Activated CD4-positive, alpha-beta T cell treated with anti-CD3 and anti-CD28 coated beads for 36 hours (primary cell): ENCODE measurements at regions of chr16 and their contacts with region 1.

Region 1: GRCh38 chr16:4271176-4272066 is 1.4 kb downstream of the TFAP4 start:
- DNase-seq: peak; percentile 96
- ATAC-seq: peak; percentile 85
- H3K4me3 Mint-ChIP-seq: peak overlapping the region; percentile 84
- H3K27ac Mint-ChIP-seq: peak overlapping the region; percentile 94
- H3K4me1 Mint-ChIP-seq: peaks cover 12% of the 10 kb centered on the region
- H3K27me3 Mint-ChIP-seq: no peaks in the 10 kb centered on the region

Region 2: GRCh38 chr16:3264137-3265036 is 1007.0 kb before region 1 on chr16:
- CTCF ChIA-PET with region 1: no interaction called
- POLR2A ChIA-PET with region 1: no interaction called
- intact Hi-C with region 1: loop called in 1 of 2 experiments (anchors 1 kb)
- DNase-seq: peak; percentile 99
- ATAC-seq: peak; percentile 95
- H3K4me3 Mint-ChIP-seq: peak overlapping the region; percentile 83
- H3K27ac Mint-ChIP-seq: peak overlapping the region; percentile 90
- H3K4me1 Mint-ChIP-seq: peaks cover 25% of the 10 kb centered on the region
- H3K27me3 Mint-ChIP-seq: no peaks in the 10 kb centered on the region

Region 3: DNA sequence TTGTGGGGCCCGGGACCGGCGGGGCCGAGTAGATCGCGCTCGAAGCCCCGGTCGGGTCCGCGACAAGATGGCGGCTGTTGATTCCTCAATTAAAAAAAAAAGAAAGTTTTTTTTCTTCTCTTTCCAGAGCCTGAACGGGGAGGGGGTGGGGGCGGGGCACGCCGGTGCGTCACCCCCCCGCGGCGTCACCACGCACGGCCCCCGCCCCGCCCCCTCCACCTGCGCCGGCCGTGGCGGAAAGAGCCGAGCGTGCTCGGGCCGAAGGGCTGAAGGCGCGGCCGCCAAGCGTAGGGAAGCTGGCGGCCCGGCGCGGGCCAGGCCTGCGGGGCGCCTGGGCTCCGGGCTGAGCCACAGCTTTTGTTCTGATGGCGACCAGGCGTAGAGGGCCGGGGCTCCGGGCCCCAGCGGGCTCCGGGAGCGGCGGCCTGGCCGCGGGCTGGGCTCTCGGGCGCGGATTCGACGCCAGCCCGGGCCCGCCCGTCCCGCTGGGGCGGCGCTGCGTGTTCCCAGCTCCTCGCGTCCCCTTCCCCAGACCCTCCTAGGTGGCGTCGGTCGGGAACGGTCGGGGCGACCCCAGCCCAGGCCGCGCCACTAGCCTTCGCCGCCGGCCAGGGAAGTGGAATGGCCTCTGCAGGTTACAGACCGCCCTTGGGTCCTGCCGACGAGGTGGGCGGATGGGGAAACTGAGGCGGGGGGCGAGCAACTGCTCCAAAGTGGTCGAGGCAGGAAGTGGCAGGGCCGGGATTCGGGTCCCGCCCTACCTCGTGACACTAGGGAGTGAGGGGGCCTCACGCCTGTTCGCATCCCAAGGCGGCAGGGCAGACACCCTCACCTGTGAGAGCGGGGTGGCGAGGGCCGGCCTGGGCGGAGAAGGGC is 390.6 kb before region 1 on chr16 and contains the start of gene CREBBP:
- CTCF ChIA-PET with region 1: no interaction called
- POLR2A ChIA-PET with region 1: no interaction called
- intact Hi-C with region 1: loop called in 1 of 2 experiments (anchors 1 kb)
- DNase-seq: peak; percentile 93
- ATAC-seq: peak; percentile 89
- H3K4me3 Mint-ChIP-seq: peak within 1 kb of the TSS; percentile 79
- H3K27ac Mint-ChIP-seq: peak within 1 kb of the TSS; percentile 69
- H3K4me1 Mint-ChIP-seq: peaks cover 36% of the 10 kb centered on the region
- H3K27me3 Mint-ChIP-seq: peaks cover 6% of the 10 kb centered on the region
- total RNA-seq, gene CREBBP: 28.1 to 37.4 TPM

Region 4: DNA sequence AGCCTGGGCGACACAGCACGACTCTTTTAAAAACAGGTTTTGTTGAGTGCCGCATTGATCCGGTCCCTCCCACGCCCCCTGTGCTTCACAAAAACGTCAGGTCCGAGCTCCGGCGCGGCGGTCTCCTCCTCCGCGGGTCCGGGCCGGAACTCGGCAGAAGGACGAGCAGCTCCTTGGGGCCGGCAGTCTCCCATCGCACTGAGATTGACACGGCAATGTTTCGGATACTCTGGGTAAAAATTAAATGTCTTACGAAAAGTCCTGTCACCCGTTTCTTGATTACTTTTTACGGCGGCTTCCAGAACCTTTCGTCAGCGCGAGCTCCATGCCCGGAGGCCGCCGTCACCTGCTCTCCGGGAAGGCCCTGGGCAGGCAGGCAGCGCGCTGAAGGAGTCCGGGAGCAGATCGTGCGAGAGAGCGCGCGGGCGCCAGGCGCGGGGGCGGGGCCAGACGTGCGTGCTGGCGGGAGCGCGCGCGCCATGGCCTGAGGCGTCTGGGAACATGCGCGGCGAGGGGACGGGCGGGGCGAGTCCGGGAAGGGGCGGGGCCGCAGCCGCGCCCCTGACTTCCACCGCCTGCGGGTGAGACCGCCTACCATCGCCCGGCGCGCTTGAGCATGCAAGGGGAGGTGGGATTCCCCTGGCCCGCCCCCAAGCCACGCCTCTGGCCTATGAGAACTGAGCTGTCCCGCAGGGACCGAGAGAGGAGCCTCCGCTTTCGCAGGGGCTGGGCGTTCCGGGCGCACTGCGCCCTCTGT is 17.8 kb before region 1 on chr16:
- CTCF ChIA-PET with region 1: interaction called, 37 read pairs
- POLR2A ChIA-PET with region 1: interaction called, 29 read pairs
- intact Hi-C with region 1: loop called (anchors 1 kb)
- DNase-seq: peak; percentile 100
- ATAC-seq: peak; percentile 98
- H3K4me3 Mint-ChIP-seq: peak overlapping the region; percentile 92
- H3K27ac Mint-ChIP-seq: peak overlapping the region; percentile 96
- H3K4me1 Mint-ChIP-seq: peaks cover 3% of the 10 kb centered on the region
- H3K27me3 Mint-ChIP-seq: no peaks in the 10 kb centered on the region

Region 5: GRCh38 chr16:4402439-4403132 is 131.2 kb after region 1 on chr16:
- CTCF ChIA-PET with region 1: interaction called, 5 read pairs
- POLR2A ChIA-PET with region 1: interaction called, 3 read pairs
- intact Hi-C with region 1: loop called in 1 of 2 experiments (anchors 5 kb)
- DNase-seq: peak; percentile 84
- ATAC-seq: peak; percentile 82
- H3K4me3 Mint-ChIP-seq: no peak overlapping the region
- H3K27ac Mint-ChIP-seq: no peak overlapping the region
- H3K4me1 Mint-ChIP-seq: no peaks in the 10 kb centered on the region
- H3K27me3 Mint-ChIP-seq: no peaks in the 10 kb centered on the region

Region 6: GRCh38 chr16:4538350-4539235 is 267.2 kb after region 1 on chr16 and contains the start of gene CDIP1:
- CTCF ChIA-PET with region 1: no interaction called
- POLR2A ChIA-PET with region 1: no interaction called
- intact Hi-C with region 1: loop called in 1 of 2 experiments (anchors 5 kb)
- DNase-seq: peak; percentile 99
- ATAC-seq: peak; percentile 81
- H3K4me3 Mint-ChIP-seq: peak within 1 kb of the TSS; percentile 75
- H3K27ac Mint-ChIP-seq: peak within 1 kb of the TSS; percentile 63
- H3K4me1 Mint-ChIP-seq: peaks cover 41% of the 10 kb centered on the region
- H3K27me3 Mint-ChIP-seq: no peaks in the 10 kb centered on the region
- total RNA-seq, gene CDIP1: 28.3 to 30.2 TPM

Region 7: DNA sequence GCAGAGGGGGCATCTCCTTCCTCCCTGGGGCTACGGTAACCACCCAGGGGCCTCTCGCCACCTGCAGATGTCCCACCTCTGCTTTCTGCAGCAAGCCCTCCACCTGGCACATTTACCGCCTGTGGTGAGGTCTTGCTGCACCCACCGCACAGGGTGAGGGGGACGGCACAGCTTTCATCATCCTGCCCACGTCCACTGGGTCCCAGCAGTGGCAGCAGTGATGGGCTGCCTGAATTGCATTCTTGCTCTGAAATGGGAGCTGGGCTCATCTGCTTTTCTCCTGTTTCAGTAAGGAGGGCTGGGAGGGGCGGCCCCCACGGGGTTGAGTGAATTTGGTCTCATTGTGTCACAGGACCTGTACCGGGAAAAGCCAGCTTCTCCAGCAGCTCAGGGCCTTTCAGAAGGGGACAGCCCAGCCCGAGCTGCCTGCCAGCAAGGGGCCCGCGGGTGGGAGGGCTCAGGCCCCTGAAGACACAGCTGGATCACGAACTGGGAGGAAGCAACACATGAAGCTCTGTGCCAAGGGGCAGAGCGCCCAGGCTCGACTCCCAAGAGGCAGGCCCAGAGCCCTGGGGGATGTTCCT is 475.7 kb after region 1 on chr16:
- CTCF ChIA-PET with region 1: no interaction called
- POLR2A ChIA-PET with region 1: no interaction called
- intact Hi-C with region 1: no loop called
- DNase-seq: no peak
- ATAC-seq: no peak
- H3K4me3 Mint-ChIP-seq: no peak overlapping the region
- H3K27ac Mint-ChIP-seq: no peak overlapping the region
- H3K4me1 Mint-ChIP-seq: peaks cover 6% of the 10 kb centered on the region
- H3K27me3 Mint-ChIP-seq: no peaks in the 10 kb centered on the region

Region 8: DNA sequence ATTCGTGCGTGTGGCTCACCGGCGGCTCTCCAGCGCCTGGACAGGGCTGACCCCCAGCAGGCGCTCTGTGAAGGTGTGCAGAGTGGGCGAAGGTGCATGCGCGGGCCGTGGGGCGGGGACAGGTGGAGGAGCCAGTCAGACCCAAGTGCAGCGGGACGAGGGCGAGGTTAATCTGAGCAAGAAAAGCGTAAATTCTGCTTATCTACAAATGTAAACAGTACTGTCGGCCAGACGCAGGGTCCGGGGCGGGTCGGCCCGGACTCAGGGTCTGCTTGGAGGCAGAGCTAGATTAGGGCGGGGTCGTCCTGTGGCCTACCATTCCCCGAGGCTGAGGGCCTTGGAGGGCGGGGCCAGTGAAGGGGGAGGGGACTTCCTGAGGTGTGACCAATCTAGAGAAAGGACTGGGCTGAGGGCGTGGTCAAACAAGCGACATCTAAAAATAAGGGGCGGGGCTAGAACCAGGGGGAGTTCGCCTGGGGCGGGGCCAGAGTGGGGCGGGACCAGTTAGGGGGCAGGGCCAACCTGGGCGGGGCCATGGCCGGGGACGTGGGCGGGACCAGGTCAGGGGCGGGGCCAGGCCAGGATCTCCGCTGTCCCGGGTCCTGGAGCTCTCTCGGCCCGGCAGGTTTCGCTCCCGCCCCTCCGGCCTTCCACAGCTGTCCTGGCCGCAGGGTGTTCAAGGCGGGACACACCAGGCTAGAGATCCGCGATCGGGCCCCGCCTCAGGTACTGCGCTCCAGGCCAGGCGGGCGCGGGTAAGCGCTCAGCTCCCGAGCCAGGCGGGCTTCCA is 686.5 kb after region 1 on chr16 and contains the start of gene SEC14L5:
- CTCF ChIA-PET with region 1: no interaction called
- POLR2A ChIA-PET with region 1: no interaction called
- intact Hi-C with region 1: loop called in 1 of 2 experiments (anchors 5 kb)
- DNase-seq: peak; percentile 98
- ATAC-seq: peak; percentile 95
- H3K4me3 Mint-ChIP-seq: peak within 1 kb of the TSS; percentile 75
- H3K27ac Mint-ChIP-seq: peak within 1 kb of the TSS; percentile 1
- H3K4me1 Mint-ChIP-seq: peaks cover 12% of the 10 kb centered on the region
- H3K27me3 Mint-ChIP-seq: peaks cover 33% of the 10 kb centered on the region
- total RNA-seq, gene SEC14L5: 0.09 to 0.28 TPM